A673 (cell line): ENCODE measurements at regions of chr2 and their contacts with region 1.

Region 1: GRCh38 chr2:69940691-69941090 is 20.7 kb downstream of the ASPRV1 start:
- DNase-seq: no peak
- H3K4me3 ChIP-seq: no peak overlapping the region
- H3K27ac ChIP-seq: no peak overlapping the region
- H3K4me1 ChIP-seq: no peaks in the 10 kb centered on the region
- H3K27me3 ChIP-seq: no peaks in the 10 kb centered on the region
- CTCF ChIP-seq: no peak

Region 2: DNA sequence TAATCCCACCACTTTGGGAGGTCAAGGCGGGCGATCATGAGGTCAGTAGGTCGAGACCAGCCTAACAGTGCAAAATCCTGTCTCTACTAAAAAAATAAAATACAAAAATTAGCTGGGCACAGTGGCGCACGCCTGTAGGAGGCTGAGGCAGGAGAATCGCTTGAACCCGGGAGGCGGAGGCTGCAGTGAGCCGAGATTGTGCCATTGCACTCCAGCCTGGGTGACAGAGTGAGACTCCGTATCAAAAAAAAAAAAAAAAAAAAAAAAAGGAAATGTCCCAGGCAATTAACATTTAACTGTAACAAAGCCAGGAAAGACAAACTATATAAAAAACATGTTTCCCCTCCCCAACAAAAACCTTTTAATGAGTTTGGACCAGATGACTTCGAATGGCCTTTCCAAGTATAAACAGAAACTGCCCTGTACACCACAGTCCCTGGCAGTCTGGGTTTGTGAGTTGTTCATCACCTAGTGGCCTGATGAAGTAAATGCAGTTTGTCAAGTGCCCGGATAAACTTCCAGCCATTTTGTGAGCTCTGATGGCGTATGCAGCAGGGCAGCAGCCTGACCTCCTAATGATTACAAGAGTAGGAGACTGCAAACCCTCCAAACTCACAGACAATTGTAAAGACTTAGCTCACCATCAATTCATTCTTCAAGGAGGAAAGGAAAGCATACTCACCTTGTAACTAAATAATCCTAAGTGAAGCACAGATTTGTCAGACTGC is 130.0 kb after region 1 on chr2:
- CTCF ChIA-PET with region 1: interaction called, 3 read pairs
- POLR2A ChIA-PET with region 1: interaction called, 10 read pairs
- intact Hi-C with region 1: no loop called
- DNase-seq: peak; percentile 86
- H3K4me3 ChIP-seq: no peak overlapping the region
- H3K27ac ChIP-seq: peak overlapping the region; percentile 10
- H3K4me1 ChIP-seq: no peaks in the 10 kb centered on the region
- H3K27me3 ChIP-seq: no peaks in the 10 kb centered on the region
- CTCF ChIP-seq: peak; percentile 85